Dorsolateral prefrontal cortex (tissue), 120 donors: ENCODE measurements at regions of chr11 and their contacts with region 1.

Region 1: DNA sequence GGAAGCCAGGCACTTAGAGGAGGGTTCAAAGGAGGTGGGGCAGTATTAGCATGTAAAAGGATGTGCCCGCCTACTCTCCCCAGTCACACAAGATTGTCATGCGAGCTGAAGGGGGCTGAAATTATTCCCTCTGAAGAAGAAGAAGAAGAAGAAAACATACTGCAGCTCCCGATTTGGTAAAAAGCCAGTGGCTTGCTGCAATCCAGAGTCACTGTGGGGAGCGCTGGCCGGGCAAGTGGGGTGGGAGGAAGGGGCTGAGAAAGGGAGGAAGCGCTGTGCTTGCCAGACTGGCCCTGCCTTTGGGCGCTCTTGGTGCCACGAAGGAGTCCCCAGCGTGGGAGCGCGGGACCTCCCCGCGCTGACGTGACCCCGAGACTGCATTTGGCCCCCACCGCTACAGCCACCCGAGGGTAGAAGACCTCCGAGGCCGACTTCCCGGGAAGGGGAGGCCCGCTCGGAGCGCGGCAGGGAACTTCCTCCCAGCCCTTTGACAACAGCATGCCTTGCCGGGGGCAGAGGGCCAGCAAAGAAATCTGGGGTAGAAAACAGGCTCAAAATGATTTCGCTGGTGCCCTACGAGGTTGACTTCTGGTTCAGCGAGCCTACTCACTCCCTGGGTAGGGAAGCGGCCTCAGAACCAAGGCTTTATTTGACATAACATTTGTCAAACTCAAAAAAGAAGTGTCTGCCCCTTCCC is 906.3 kb downstream of the DLG2 start:
- DNase-seq: peak in 8 of 10 donors; percentile 17 to 67 (median 40)
- H3K4me3 ChIP-seq: peak overlapping the region; percentile 45 to 83 (median 66)
- H3K27ac ChIP-seq: peak overlapping the region in 58 of 59 donors; percentile 3 to 89 (median 76)
- H3K27me3 ChIP-seq: no peaks in the 10 kb centered on the region
- CTCF ChIP-seq: no peak

Region 2: GRCh38 chr11:84558085-84558905 is 162.6 kb before region 1 on chr11:
- intact Hi-C with region 1: loop called (anchors 5 kb)
- DNase-seq: peak in 5 of 10 donors; percentile 11 to 68 (median 38)
- H3K4me3 ChIP-seq: no peak overlapping the region
- H3K27ac ChIP-seq: no peak overlapping the region
- H3K27me3 ChIP-seq: no peaks in the 10 kb centered on the region
- CTCF ChIP-seq: peak; percentile 67 to 94 (median 86)

Region 3: GRCh38 chr11:84655712-84656111 is 65.1 kb before region 1 on chr11:
- intact Hi-C with region 1: no loop called
- DNase-seq: no peak
- H3K4me3 ChIP-seq: no peak overlapping the region
- H3K27ac ChIP-seq: no peak overlapping the region
- H3K27me3 ChIP-seq: no peaks in the 10 kb centered on the region
- CTCF ChIP-seq: no peak

Region 4: GRCh38 chr11:85027346-85027745 is 306.5 kb after region 1 on chr11:
- intact Hi-C with region 1: no loop called
- DNase-seq: peak in 4 of 10 donors; percentile 8 to 47 (median 20)
- H3K4me3 ChIP-seq: peak overlapping the region in 7 of 59 donors; percentile 3 to 34 (median 23)
- H3K27ac ChIP-seq: no peak overlapping the region
- H3K27me3 ChIP-seq: no peaks in the 10 kb centered on the region
- CTCF ChIP-seq: no peak

Region 5: GRCh38 chr11:85098996-85099395 is 378.1 kb after region 1 on chr11:
- intact Hi-C with region 1: no loop called
- DNase-seq: no peak
- H3K4me3 ChIP-seq: no peak overlapping the region
- H3K27ac ChIP-seq: no peak overlapping the region
- H3K27me3 ChIP-seq: no peaks in the 10 kb centered on the region
- CTCF ChIP-seq: no peak